OCI-LY7 (cell line): ENCODE measurements at regions of chr14 and their contacts with region 1.

Region 1: DNA sequence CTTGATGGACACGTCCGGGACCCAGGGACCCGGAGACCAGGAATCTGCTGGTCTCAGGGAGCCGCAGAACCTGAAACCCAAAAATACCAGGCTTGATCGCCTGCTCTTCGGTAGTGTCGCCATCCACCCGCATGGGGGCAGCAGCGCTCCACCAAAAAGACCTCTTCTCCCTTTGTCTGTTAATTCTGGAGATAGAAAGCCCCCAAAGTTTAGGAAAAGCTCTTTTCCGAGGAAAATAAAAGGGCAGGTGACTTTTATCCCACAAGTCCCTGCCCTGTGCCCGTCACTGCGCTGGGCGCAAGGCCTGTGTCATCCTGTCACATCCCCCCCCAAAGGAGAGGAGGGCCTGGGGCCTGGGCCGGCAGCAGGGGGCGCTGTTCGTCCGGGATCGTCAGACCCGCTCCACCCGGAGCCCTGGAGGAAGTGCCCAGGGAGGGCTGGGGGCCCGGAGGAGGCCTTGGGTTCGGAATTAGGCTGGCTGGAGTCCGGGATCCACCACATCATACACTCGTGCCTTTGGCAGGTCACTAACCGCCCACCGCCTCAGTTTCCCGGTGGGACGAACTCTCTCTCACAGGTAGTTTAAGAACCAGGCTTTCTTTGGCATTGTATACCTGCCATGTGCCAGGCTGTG is 31.9 kb downstream of the DAD1 start:
- DNase-seq: peak; percentile 93
- H3K4me3 ChIP-seq: peak overlapping the region; percentile 57
- H3K27ac ChIP-seq: peak overlapping the region; percentile 97
- H3K4me1 ChIP-seq: peaks cover 91% of the 10 kb centered on the region
- CTCF ChIP-seq: peak; percentile 100

Region 2: GRCh38 chr14:22358726-22359125 is 198.4 kb before region 1 on chr14:
- CTCF ChIA-PET with region 1: no interaction called
- POLR2A ChIA-PET with region 1: no interaction called
- intact Hi-C with region 1: no loop called
- DNase-seq: no peak
- H3K4me3 ChIP-seq: no peak overlapping the region
- H3K27ac ChIP-seq: no peak overlapping the region
- H3K4me1 ChIP-seq: no peaks in the 10 kb centered on the region
- CTCF ChIP-seq: no peak

Region 3: GRCh38 chr14:22432348-22432976 is 124.6 kb before region 1 on chr14:
- CTCF ChIA-PET with region 1: interaction called, 3 read pairs
- POLR2A ChIA-PET with region 1: interaction called, 8 read pairs
- intact Hi-C with region 1: loop called (anchors 1 kb)
- DNase-seq: peak; percentile 94
- H3K4me3 ChIP-seq: peak overlapping the region; percentile 61
- H3K27ac ChIP-seq: peak overlapping the region; percentile 97
- H3K4me1 ChIP-seq: peaks cover 88% of the 10 kb centered on the region
- CTCF ChIP-seq: no peak

Region 4: GRCh38 chr14:22491683-22492621 is 65.2 kb before region 1 on chr14:
- CTCF ChIA-PET with region 1: interaction called, 5 read pairs
- POLR2A ChIA-PET with region 1: interaction called, 5 read pairs
- intact Hi-C with region 1: loop called (anchors 1 kb)
- DNase-seq: no peak
- H3K4me3 ChIP-seq: peak overlapping the region; percentile 46
- H3K27ac ChIP-seq: peak overlapping the region; percentile 51
- H3K4me1 ChIP-seq: peaks cover 98% of the 10 kb centered on the region
- CTCF ChIP-seq: no peak

Region 5: DNA sequence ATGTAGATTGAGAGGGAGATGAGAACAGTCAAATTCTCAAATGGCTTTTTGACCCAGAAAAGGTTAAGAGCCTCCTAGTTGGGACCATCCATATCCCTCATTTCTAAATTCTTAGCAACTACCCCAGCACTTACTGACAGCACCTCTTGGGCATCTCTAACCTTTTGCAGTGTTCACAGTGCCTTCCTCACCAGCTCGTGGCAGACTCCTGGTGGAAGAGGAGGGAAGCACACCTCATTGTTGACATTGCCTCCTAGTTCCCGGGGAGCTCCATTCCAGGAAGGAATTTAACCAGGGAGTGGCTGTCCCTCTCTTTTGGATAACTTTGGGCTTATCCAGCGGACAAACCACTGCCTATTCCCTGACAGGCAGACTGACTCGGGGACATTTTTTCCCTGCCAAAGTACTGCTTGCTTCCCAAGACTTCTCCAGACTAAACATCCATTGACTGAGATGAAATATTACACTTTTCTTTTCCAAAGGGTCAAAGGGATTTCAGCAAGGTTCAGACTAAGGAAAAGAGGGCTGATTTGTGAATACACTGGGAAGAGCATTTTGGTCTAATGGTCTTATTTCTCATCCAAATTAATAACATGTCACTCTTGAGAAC is 96.0 kb after region 1 on chr14:
- CTCF ChIA-PET with region 1: no interaction called
- POLR2A ChIA-PET with region 1: no interaction called
- intact Hi-C with region 1: loop called (anchors 1 kb)
- DNase-seq: peak; percentile 72
- H3K4me3 ChIP-seq: no peak overlapping the region
- H3K27ac ChIP-seq: no peak overlapping the region
- H3K4me1 ChIP-seq: no peaks in the 10 kb centered on the region
- CTCF ChIP-seq: peak; percentile 84

Region 6: DNA sequence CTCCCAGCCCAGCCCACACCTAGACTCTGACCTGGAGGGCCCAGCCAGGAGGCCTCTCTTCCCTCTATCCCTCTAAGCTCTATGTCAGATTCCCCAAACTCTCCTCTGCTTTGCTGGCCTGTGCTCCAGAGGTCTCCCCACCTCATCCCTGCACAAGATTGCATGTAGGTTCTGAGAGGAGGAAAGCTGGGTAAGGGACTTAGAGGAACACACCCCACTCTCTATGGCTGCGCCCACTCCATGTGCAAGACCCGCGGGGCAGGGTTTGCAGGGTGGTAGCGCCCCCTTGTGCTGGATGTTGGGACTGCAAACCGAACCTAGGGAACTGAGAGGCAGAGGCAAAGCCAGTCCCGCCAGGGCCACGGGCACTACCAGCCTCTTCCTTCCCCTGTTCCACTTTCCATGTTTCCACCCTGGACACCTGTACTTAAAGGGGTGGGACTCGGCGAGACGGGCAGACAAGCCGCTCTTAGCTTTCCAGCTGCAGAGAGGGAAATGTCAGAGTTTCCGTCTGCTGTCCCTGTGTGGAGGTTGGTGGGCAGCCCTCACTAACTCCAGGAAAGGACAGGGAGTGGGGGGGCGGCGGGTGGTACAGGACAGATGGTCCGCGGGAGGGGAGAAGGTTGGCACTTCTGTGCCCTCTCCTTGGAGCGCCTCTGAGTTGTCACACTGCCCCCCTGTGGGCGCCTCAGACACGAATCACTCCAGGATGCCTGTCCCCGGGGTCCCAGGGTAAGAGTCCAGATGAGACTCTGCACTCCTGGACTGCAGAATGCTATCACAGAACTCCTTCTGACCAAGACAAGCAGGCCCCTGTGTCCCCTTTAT is 296.0 kb after region 1 on chr14:
- CTCF ChIA-PET with region 1: no interaction called
- POLR2A ChIA-PET with region 1: interaction called, 4 read pairs
- intact Hi-C with region 1: loop called (anchors 1 kb)
- DNase-seq: peak; percentile 90
- H3K4me3 ChIP-seq: peak overlapping the region; percentile 66
- H3K27ac ChIP-seq: peak overlapping the region; percentile 48
- H3K4me1 ChIP-seq: peaks cover 14% of the 10 kb centered on the region
- CTCF ChIP-seq: peak; percentile 93